ENCODE measurements at regions of chr12 and their contacts with region 1.

Region 1: DNA sequence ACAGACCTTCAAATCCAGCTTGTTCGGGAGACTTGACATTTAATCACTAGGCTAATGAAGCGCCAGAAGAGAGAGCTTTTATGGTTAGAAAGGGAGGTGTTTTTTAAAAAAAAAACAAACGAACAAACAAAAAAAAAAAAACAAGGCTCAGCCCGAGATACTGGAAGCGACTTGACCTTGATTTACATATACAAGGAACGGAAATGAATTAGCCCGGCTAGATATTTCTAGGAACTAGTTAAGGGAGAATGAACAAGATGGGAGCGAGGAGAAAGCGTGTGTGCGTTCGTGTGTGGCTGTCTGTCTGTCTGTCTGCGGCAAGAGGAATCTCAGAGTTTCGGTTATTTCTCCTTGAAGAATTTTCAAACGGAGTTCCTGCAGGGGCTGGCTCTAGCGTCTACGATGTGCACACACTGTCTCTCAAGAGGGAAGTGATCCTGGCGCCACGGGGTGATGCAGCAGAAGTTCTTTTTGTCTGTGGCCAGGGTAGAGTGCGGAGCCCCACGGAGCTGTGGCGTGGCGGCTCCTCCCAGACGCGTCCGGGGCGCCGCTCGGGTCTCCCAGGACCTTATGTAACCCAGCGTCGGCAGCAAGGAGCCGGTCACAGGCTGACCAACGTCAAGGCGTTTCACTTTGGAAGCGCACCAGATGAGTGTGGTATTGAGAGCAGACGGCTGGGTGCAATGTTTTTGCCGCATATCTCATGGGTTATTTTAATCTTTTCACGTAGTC is 18.8 kb downstream of the SOCS2 start:
- DNase-seq: peak; percentile 25
- H3K4me3 Mint-ChIP-seq: peak overlapping the region; percentile 87
- H3K27ac Mint-ChIP-seq: peak overlapping the region; percentile 14
- H3K4me1 Mint-ChIP-seq: peaks cover 36% of the 10 kb centered on the region
- H3K27me3 Mint-ChIP-seq: peaks cover 53% of the 10 kb centered on the region

Region 2: DNA sequence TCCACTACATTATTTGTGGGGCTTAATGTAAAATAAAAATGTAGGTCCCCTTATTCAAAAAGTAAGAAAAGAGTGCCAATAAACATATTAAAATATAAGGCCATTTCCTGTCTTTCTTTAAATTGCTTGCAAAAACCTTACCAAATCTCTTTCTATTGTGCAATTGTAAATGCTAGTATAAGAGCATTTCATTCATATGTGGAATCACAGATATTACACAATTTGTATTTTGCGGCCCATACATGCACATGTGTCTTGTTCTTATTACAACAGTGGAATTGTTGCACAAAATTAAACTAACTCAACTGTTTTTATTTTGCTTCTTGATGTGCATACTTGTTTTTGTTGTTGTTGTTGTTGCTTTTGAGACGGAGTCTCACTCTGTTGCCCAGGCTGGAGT is 65.8 kb after region 1 on chr12:
- intact Hi-C with region 1: loop called (anchors 5 kb)
- DNase-seq: no peak
- H3K4me3 Mint-ChIP-seq: no peak overlapping the region
- H3K27ac Mint-ChIP-seq: no peak overlapping the region
- H3K4me1 Mint-ChIP-seq: no peaks in the 10 kb centered on the region
- H3K27me3 Mint-ChIP-seq: peaks cover 2% of the 10 kb centered on the region

Measured in activated T-helper 2 cell treated with anti-CD3 and anti-CD28 coated beads, Interferon-gamma antibody, Interleukin-2, Interleukin-4, amounts not matched to agents 10 μg/mL and 5 μg/mL and 100 μg/mL, durations not matched to agents 14 hours and 24 hours and 36 hours (primary cell).